Activated CD8-positive, alpha-beta T cell treated with anti-CD3 and anti-CD28 coated beads for 36 hours (primary cell): ENCODE measurements at regions of chr22 and their contacts with region 1.

Region 1: DNA sequence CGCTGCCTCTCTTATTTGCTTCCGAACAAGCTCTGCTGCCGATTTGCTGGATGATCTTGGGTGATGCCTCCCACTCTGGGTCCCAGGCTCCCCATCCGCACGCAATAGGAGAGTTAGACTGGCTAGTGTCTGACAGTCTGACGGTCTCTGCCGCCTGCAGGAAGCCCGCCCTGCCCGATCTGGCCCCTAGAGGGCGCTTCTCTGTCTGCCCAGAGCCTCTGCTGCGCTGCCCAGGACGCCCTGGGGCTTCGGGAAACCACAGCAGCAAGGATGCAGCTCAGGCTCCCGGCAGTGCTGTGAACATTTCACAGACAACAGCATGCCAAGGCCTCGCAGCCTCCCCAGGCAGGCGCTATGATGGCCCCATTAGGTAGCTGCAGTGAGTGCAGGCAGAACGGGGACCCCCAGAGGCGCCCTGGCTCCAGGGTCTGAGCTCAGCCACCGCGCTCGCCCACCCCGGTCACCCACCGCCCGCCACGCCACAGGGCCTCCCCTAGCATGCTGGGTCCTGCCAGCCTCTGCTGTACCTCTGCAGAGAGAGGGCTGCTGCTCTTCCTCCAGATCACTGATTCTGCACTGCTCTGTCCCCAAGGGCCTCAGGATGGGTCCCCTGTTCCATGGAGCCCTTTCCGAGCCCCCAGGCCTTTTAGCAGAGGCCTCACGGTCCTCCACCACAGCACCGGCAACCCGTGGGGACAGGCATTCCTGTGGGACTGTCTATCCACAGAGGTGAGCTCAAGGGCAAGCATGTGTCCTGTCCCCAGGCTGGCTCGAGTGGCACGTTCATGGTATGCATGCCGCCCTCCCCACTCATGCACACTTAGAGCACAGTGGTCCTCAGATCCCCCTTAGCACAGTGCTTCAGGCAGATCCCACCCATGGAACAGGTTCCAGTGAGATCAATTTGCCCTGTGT is 4.3 kb upstream of the BAIAP2L2 start:
- DNase-seq: peak; percentile 87
- ATAC-seq: peak; percentile 93
- H3K4me3 Mint-ChIP-seq: no peak overlapping the region
- H3K27ac Mint-ChIP-seq: no peak overlapping the region
- H3K4me1 Mint-ChIP-seq: peaks cover 1% of the 10 kb centered on the region
- H3K27me3 Mint-ChIP-seq: no peaks in the 10 kb centered on the region
- CTCF ChIP-seq: peak; percentile 95

Region 2: DNA sequence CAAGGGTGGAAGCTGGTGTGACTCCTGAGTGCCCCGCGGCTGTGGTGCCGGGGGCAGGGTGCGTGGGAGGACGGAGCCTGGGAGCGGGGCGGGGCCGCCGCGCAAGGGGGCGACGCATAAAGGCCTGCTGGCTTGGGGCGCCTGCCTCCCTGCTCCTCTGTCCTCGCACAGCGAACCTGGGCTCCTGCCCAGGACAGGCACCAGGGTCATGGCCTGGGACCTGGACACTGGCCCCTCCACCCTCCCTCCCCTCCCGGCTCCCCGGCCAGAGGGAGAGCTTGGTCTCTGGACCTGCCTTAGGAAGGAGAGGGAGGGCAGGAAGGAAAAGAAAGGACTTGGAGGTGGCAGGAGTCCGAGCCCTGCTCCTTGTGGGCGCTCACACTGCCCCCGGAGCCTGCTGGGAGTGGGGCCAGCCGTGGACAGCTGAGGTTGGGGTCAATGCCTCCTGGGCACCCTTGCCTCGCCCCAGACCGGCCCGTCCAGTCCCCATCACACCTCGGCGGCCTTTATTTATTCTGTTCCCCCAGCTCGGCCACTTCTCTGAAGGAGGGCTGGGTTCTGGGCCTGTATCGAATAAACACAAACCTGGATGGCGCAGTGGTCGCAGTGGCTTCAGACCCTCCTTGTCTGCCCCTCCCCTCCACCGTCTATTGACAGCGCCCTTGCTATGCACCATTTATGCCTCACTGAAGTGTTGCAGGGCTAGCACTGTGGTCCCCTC is 39.5 kb before region 1 on chr22:
- CTCF ChIA-PET with region 1: no interaction called
- POLR2A ChIA-PET with region 1: no interaction called
- intact Hi-C with region 1: no loop called
- DNase-seq: no peak
- ATAC-seq: no peak
- H3K4me3 Mint-ChIP-seq: no peak overlapping the region
- H3K27ac Mint-ChIP-seq: no peak overlapping the region
- H3K4me1 Mint-ChIP-seq: no peaks in the 10 kb centered on the region
- H3K27me3 Mint-ChIP-seq: peaks cover 9% of the 10 kb centered on the region
- CTCF ChIP-seq: no peak

Region 3: GRCh38 chr22:38097557-38098409 is 17.0 kb before region 1 on chr22:
- CTCF ChIA-PET with region 1: interaction called, 23 read pairs
- POLR2A ChIA-PET with region 1: interaction called, 4 read pairs
- intact Hi-C with region 1: no loop called
- DNase-seq: no peak
- ATAC-seq: no peak
- H3K4me3 Mint-ChIP-seq: no peak overlapping the region
- H3K27ac Mint-ChIP-seq: no peak overlapping the region
- H3K4me1 Mint-ChIP-seq: no peaks in the 10 kb centered on the region
- H3K27me3 Mint-ChIP-seq: no peaks in the 10 kb centered on the region
- CTCF ChIP-seq: no peak

Region 4: DNA sequence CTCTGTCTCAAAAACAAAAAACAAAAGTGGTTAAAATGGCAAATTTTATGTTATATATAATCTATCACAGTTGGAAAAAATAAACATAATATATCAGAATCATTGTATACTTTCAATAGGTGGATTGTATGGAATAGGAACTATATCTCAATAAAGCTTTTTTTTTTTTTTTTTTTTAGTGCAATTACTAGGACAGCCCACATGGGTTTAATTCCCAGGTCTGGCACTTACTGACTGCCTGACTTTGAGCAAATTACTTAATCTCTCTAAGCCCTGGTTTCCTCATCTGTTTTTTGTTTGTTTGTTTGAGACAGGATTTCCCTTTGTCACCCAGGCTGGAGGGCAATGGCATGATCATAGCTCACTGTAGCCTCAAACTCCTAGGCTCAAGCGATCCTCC is 21.8 kb after region 1 on chr22:
- CTCF ChIA-PET with region 1: interaction called, 13 read pairs
- POLR2A ChIA-PET with region 1: no interaction called
- intact Hi-C with region 1: no loop called
- DNase-seq: no peak
- ATAC-seq: no peak
- H3K4me3 Mint-ChIP-seq: no peak overlapping the region
- H3K27ac Mint-ChIP-seq: no peak overlapping the region
- H3K4me1 Mint-ChIP-seq: no peaks in the 10 kb centered on the region
- H3K27me3 Mint-ChIP-seq: no peaks in the 10 kb centered on the region
- CTCF ChIP-seq: no peak

Region 5: GRCh38 chr22:38151126-38151500 is 36.4 kb after region 1 on chr22:
- CTCF ChIA-PET with region 1: no interaction called
- POLR2A ChIA-PET with region 1: no interaction called
- intact Hi-C with region 1: no loop called
- DNase-seq: no peak
- ATAC-seq: no peak
- H3K4me3 Mint-ChIP-seq: no peak overlapping the region
- H3K27ac Mint-ChIP-seq: no peak overlapping the region
- H3K4me1 Mint-ChIP-seq: peaks cover 15% of the 10 kb centered on the region
- H3K27me3 Mint-ChIP-seq: no peaks in the 10 kb centered on the region
- CTCF ChIP-seq: no peak

Region 6: DNA sequence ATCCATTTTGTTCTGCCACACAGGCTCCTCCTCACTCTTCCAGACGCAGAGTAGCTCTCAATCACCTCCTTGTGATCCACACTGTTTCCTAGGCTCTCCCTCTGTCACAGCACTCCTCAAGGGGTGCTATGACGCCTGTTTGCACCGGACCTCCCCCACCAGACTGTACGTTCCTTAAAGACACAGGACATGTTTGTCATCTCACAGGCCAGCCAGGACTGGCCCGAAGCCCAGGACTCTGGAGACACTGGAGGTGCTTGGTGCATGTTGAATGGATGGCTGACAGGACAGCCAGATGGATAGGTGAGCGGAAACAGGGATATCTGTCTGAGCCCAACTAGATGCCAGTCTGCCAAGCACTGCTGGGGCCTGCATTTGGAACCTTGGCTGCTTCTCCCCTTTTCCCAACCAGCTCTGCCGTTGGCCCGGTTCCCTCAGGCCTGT is 53.3 kb after region 1 on chr22:
- CTCF ChIA-PET with region 1: no interaction called
- POLR2A ChIA-PET with region 1: no interaction called
- intact Hi-C with region 1: no loop called
- DNase-seq: no peak
- ATAC-seq: no peak
- H3K4me3 Mint-ChIP-seq: no peak overlapping the region
- H3K27ac Mint-ChIP-seq: no peak overlapping the region
- H3K4me1 Mint-ChIP-seq: peaks cover 15% of the 10 kb centered on the region
- H3K27me3 Mint-ChIP-seq: no peaks in the 10 kb centered on the region
- CTCF ChIP-seq: no peak

Region 7: DNA sequence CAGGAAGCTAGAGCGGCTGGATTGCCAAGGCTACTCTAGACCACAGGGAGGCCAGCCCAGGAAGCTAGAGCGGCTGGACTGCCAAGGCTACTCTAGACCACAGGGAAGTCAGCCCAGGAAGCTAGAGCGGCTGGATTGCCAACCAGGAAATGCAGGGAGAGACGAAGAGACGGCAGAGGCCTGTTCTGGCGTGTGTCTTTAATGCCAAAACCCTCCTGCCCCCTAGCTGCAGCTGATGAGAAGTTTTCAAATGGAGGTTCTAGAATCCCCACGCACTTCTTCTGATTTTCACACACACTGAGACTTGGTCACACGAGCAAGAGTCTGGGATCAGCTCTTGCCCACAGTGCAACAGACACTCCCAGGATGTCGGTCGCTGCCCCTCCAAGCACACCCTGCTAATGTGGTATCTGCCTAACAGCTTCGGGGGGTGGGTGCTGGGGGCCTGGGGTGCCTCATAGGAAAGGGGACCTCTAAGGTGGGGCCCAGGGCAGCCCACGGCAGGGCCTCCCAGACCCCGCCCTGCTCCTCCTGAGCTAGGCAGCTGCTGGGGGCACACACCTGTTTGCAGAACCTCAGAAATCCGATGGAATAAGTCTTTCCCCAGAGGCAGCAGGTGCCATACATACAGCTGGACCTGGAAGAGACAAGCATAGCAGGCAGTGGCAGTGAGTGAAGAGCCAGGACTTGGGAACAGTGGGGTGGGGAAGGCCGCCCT is 115.5 kb after region 1 on chr22:
- CTCF ChIA-PET with region 1: interaction called, 23 read pairs
- POLR2A ChIA-PET with region 1: no interaction called
- intact Hi-C with region 1: no loop called
- DNase-seq: peak; percentile 66
- ATAC-seq: peak; percentile 61
- H3K4me3 Mint-ChIP-seq: no peak overlapping the region
- H3K27ac Mint-ChIP-seq: no peak overlapping the region
- H3K4me1 Mint-ChIP-seq: no peaks in the 10 kb centered on the region
- H3K27me3 Mint-ChIP-seq: no peaks in the 10 kb centered on the region
- CTCF ChIP-seq: peak; percentile 59

Region 8: GRCh38 chr22:38442967-38443627 is 328.4 kb after region 1 on chr22:
- CTCF ChIA-PET with region 1: no interaction called
- POLR2A ChIA-PET with region 1: no interaction called
- intact Hi-C with region 1: no loop called
- DNase-seq: no peak
- ATAC-seq: no peak
- H3K4me3 Mint-ChIP-seq: no peak overlapping the region
- H3K27ac Mint-ChIP-seq: no peak overlapping the region
- H3K4me1 Mint-ChIP-seq: no peaks in the 10 kb centered on the region
- H3K27me3 Mint-ChIP-seq: no peaks in the 10 kb centered on the region
- CTCF ChIP-seq: no peak